Adrenal gland (tissue), 19 donors: ENCODE measurements at regions of chr11 and their contacts with region 1.

Region 1: GRCh38 chr11:120335908-120336640 is at the start of gene ARHGEF12:
- DNase-seq: peak; percentile 96 to 97 (median 96)
- H3K4me3 ChIP-seq: peak within 1 kb of the TSS; percentile 71 to 97 (median 82)
- H3K27ac ChIP-seq: peak within 1 kb of the TSS; percentile 95 to 99 (median 98)
- H3K4me1 ChIP-seq: peaks cover 35 to 74% of the 10 kb centered on the region in 2 donors
- H3K27me3 ChIP-seq: no peaks in the 10 kb centered on the region
- CTCF ChIP-seq: peak in 1 of 6 experiments; percentile 36
- POLR2A ChIP-seq: peak; percentile 88 to 89
- total RNA-seq, gene ARHGEF12: 74.9 to 125 (median 105) TPM

Region 2: DNA sequence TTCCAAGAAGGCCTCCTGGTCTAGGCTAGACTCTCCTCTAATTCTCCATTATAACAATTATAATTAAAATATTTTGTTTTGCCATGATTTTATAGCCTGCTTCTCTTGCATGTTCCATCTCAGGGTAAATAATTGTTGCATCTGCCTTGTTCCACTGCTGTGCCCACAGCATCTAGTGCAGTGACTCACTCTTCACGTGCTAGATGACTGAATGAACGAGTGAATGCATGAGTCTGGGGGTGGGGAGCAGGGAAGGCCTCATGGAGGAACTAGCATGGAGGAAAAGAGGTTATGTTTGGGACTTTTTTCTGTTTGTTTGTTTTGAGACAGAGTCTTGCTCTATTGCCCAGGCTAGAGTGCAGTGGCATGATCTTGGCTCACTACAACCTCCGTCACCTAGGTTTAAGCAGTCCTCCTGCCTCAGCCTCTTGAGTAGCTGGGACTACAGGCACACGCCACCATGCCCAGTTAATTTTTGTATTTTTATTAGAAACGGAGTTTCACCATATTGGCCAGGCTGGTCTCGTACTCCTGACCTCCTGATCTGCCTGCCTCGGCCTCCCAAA is 130.4 kb before region 1 on chr11:
- intact Hi-C with region 1: no loop called
- DNase-seq: peak in 5 of 7 donors; percentile 48 to 72 (median 56)
- H3K4me3 ChIP-seq: no peak overlapping the region
- H3K27ac ChIP-seq: peak overlapping the region in 1 of 5 donors; percentile 13
- H3K4me1 ChIP-seq: peaks cover 25 to 30% of the 10 kb centered on the region in 2 donors
- H3K27me3 ChIP-seq: no peaks in the 10 kb centered on the region
- CTCF ChIP-seq: no peak
- POLR2A ChIP-seq: peak in 1 of 2 donors; percentile 37

Region 3: GRCh38 chr11:120424185-120424969 is 88.3 kb after region 1 on chr11:
- intact Hi-C with region 1: loop called in 1 of 2 experiments (anchors 10 kb)
- DNase-seq: no peak
- H3K4me3 ChIP-seq: no peak overlapping the region
- H3K27ac ChIP-seq: no peak overlapping the region
- H3K4me1 ChIP-seq: peaks cover 0 to 13% of the 10 kb centered on the region in 2 donors
- H3K27me3 ChIP-seq: no peaks in the 10 kb centered on the region
- CTCF ChIP-seq: no peak
- POLR2A ChIP-seq: no peak

Region 4: GRCh38 chr11:120471131-120471530 is 135.1 kb after region 1 on chr11:
- intact Hi-C with region 1: loop called in 1 of 2 experiments (anchors 10 kb)
- DNase-seq: no peak
- H3K4me3 ChIP-seq: no peak overlapping the region
- H3K27ac ChIP-seq: no peak overlapping the region
- H3K4me1 ChIP-seq: no peaks in the 10 kb centered on the region
- H3K27me3 ChIP-seq: no peaks in the 10 kb centered on the region
- CTCF ChIP-seq: no peak
- POLR2A ChIP-seq: no peak

Region 5: GRCh38 chr11:120682866-120683265 is 346.8 kb after region 1 on chr11:
- intact Hi-C with region 1: loop called in 1 of 2 experiments (anchors 10 kb)
- DNase-seq: no peak
- H3K4me3 ChIP-seq: no peak overlapping the region
- H3K27ac ChIP-seq: no peak overlapping the region
- H3K4me1 ChIP-seq: no peaks in the 10 kb centered on the region
- H3K27me3 ChIP-seq: no peaks in the 10 kb centered on the region
- CTCF ChIP-seq: no peak
- POLR2A ChIP-seq: no peak